ENCODE measurements at regions of chr1 and their contacts with region 1.

Region 1: GRCh38 chr1:46158312-46159281 is 16.3 kb upstream of the TSPAN1 start:
- DNase-seq: no peak
- CTCF ChIP-seq: no peak

Region 2: GRCh38 chr1:46148318-46148717 is 10.3 kb before region 1 on chr1:
- CTCF ChIA-PET with region 1: interaction called, 19 read pairs
- POLR2A ChIA-PET with region 1: no interaction called
- DNase-seq: no peak
- CTCF ChIP-seq: no peak

Measured in GM10248 (cell line).